ENCODE measurements at regions of chr13 and their contacts with region 1.

Region 1: DNA sequence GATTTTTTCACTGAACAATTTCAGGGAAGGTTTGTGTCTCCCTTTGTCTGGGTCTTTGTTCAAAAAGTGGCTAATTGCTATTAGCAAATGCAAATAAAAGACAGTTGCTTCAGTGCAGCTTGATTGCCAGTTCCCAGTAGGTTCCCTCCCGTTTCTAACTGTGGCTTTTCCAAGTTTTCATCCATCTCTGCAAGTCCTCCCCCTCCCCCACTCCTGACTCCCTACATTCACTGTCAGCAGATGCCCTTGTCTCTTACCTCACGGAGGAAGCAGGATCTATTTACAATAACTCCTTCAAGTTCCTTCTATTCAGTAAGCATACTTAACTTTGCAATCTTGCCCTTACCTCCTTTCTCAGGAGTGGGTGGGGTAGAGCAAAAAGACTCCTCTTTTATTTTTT is 55.4 kb upstream of the SCEL start:
- DNase-seq: no peak
- H3K4me3 ChIP-seq: no peak overlapping the region
- H3K27ac ChIP-seq: no peak overlapping the region
- H3K4me1 ChIP-seq: peaks cover 3% of the 10 kb centered on the region
- H3K27me3 ChIP-seq: peaks cover 3 to 12% of the 10 kb centered on the region in 2 experiments
- CTCF ChIP-seq: no peak
- POLR2A ChIP-seq: no peak

Region 2: DNA sequence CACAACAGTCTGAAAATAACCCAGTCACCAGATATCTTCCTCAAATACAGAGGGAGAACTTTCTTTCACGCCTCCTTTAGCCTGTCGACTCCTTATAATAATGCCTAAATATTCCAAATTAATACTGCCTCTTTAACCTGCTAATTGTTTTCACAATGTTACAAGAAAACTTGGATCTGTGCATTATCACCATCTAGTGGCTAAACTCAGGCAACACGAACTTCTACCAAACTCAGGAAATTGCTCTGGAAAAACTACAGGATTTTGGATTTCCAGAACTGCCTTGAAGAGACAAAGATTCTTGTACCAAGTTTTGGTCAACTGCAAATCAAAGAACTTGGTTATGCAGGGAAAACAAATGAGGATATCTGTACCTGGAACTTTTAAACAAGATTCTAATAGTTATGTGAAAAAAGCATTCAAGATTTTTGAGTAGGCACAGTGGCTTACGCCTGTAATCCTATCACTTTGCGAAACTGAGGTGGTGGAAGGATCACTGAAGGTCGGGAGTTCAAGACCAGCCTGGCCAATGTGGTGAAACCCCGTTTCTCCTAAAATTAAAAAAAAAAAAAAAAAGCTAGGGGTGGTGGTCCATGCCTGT is 477.4 kb before region 1 on chr13:
- CTCF ChIA-PET with region 1: interaction called, 9 read pairs
- POLR2A ChIA-PET with region 1: no interaction called
- dilution Hi-C with region 1: no loop called
- intact Hi-C with region 1: loop called (anchors 2 kb)
- DNase-seq: peak; percentile 57
- H3K4me3 ChIP-seq: no peak overlapping the region
- H3K27ac ChIP-seq: no peak overlapping the region
- H3K4me1 ChIP-seq: no peaks in the 10 kb centered on the region
- H3K27me3 ChIP-seq: no peaks in the 10 kb centered on the region
- CTCF ChIP-seq: peak; percentile 55 to 67
- POLR2A ChIP-seq: no peak

Region 3: DNA sequence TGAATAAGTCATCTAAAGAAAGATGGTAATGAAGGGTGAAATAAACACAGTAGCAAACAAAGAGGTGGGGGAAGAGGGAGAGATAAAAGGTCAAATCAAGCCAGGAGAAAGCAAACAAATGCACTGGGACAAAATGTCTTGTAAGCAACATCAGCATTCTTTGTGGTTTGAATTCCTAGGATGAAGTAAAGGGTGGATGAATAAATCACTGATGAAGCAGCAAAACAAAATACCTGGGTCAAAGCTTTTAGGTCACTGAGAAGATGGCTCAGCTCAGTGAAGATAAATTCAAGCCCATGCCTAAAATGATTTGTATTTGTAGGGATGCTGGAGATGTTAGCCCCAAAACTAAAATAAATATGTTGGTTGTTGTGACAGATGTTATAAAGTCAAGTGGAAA is 366.6 kb before region 1 on chr13:
- CTCF ChIA-PET with region 1: interaction called, 5 read pairs
- POLR2A ChIA-PET with region 1: no interaction called
- dilution Hi-C with region 1: no loop called
- intact Hi-C with region 1: loop called (anchors 10 kb)
- DNase-seq: no peak
- H3K4me3 ChIP-seq: no peak overlapping the region
- H3K27ac ChIP-seq: no peak overlapping the region
- H3K4me1 ChIP-seq: no peaks in the 10 kb centered on the region
- H3K27me3 ChIP-seq: no peaks in the 10 kb centered on the region
- CTCF ChIP-seq: no peak
- POLR2A ChIP-seq: no peak

Region 4: GRCh38 chr13:77329133-77329910 is 150.7 kb before region 1 on chr13:
- CTCF ChIA-PET with region 1: interaction called, 27 read pairs
- POLR2A ChIA-PET with region 1: interaction called, 3 read pairs
- dilution Hi-C with region 1: no loop called
- intact Hi-C with region 1: loop called (anchors 1 kb)
- DNase-seq: peak; percentile 94
- H3K4me3 ChIP-seq: peak overlapping the region; percentile 67 to 90 (median 69)
- H3K27ac ChIP-seq: peak overlapping the region; percentile 75
- H3K4me1 ChIP-seq: peaks cover 31% of the 10 kb centered on the region
- H3K27me3 ChIP-seq: peaks cover 0 to 5% of the 10 kb centered on the region in 2 experiments
- CTCF ChIP-seq: no peak
- POLR2A ChIP-seq: peak; percentile 9

Region 5: DNA sequence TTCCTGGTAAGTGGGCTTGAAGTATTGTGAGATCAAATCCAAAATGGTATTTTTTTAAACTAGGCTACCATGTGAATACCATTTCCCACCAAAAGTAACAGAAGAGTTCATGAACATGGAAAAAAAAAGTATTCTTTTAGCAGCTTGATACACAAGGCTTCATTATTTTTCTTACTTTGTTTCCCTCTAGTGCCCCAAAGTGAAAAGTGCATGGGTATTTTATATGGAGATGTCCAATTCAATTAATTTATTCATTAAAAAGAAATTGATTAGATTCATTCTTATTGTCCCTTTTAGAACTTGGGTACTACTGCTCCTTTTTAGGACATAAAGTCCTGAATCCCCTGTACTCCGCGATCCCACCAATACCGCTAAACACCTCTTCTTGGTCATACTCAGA is 26.8 kb after region 1 on chr13:
- CTCF ChIA-PET with region 1: interaction called, 11 read pairs
- POLR2A ChIA-PET with region 1: no interaction called
- dilution Hi-C with region 1: no loop called
- intact Hi-C with region 1: loop called (anchors 2 kb)
- DNase-seq: peak; percentile 58
- H3K4me3 ChIP-seq: no peak overlapping the region
- H3K27ac ChIP-seq: no peak overlapping the region
- H3K4me1 ChIP-seq: peaks cover 29% of the 10 kb centered on the region
- H3K27me3 ChIP-seq: peaks cover 4 to 5% of the 10 kb centered on the region in 2 experiments
- CTCF ChIP-seq: peak; percentile 3 to 17
- POLR2A ChIP-seq: no peak

Measured in endothelial cell of umbilical vein (primary cell).